Posterior vena cava (tissue), 2 donors: ENCODE measurements at regions of chr15 and their contacts with region 1.

Region 1: DNA sequence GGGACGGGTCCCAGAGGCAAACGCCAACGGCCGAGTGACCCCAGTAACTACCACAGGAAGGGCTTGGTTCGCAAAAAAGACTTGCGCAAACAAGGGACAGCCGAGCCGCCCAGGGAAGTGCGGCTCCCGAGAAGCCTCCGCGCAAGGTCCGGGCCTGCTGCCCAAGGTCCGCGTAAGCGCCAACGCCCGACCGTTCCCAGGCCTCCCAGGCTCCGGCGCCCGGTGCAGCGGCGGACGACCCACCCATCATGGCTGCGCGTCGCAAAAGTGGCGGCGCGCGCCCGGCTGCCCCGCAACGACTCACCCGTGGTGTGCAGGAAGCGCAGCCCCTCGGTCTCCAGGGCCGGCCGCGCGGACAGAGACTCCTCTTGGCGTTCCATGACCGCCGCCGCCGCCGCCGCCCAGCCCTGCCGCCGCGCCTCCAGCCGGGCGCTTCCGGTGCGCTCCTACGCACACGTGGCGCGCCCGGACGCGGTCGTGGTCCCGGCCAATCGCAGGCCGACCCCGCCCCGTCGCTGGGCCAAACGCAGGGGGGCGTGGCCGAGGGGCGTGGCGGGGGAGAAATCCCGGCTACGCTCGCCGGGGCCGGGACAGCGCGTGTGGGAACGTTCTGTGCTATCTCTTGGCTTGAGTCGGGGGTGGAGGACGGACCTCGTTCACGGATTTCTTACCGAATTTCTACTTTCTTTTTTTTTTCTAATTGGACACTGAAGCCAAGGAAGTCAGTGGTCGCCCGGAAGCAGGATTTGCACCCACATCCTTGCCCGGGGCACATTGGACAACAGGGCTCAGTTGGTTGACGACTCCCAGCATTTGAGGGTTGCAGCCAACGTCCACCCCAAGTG is at the start of gene SELENOS:
- DNase-seq: peak; percentile 98
- total RNA-seq, gene SELENOS: 67.4 to 76.7 TPM

Region 2: GRCh38 chr15:101232677-101233076 is 44.6 kb before region 1 on chr15:
- intact Hi-C with region 1: loop called in 1 of 2 experiments (anchors 2 kb)
- DNase-seq: no peak

Region 3: DNA sequence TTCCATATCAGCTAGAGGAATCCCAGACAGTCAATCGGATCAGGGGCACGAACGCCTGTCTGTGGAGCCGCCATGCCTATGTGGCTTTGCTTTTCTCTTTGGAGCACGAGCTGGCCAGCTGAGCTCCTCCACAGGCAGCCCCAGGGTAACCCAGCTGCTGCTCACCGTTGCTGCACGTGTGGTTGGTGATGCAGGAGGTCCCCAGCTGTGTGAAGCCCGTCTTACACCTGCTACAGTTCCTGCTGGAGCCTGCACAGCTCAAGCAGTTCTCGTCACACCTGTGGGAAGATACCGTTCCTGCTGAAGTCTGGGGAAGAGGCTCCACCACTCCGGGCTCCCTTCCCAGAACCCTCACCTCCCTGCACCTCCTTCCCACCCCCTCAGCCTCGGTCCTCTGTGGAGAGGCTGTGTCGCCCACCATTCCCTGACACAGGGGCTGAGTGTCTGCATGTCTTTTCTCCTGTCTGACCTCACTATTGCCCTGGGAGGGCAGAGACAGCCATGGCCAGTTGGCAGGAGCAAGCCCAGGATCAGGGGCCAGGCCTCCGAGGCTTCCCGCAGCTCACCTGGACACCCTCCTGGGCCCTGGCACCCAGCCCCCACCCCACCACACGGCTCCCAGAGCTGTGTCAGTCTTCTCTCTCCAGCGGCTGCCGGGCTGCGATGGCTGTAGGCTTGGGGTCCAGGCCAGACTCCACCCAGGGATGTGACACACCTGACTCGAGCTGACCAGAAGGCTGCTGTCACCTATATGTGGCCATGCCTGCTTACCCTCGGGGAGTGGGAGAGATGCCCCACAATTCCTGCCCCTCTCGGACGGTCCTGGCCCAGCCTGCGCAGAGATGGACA is 30.0 kb after region 1 on chr15:
- intact Hi-C with region 1: no loop called
- DNase-seq: peak; percentile 71